H1 (cell line): ENCODE measurements at regions of chr2 and their contacts with region 1.

Region 1: DNA sequence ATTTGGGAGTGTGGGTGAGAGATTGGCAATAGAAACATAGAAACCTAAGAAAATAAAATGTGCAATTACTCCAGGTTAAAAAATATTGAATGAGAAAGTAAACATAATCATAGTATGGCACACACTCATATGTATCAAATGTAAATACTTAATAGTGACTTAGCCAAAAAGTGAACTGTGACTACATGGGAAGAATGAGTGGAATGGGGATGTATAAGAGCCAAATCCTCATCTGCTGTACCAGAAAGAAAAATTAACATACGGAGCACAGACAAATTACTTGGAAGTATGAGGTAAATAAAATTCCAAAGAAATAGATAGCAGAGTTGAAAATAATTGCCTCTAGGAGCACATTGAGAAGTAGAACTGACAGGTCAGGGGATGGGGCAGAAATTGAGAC is 4.0 kb downstream of the FLACC1 start:
- DNase-seq: no peak
- H3K4me3 ChIP-seq: no peak overlapping the region
- H3K27ac ChIP-seq: no peak overlapping the region
- H3K4me1 ChIP-seq: no peaks in the 10 kb centered on the region
- H3K27me3 ChIP-seq: no peaks in the 10 kb centered on the region
- CTCF ChIP-seq: no peak
- EP300 ChIP-seq: no peak
- POLR2A ChIP-seq: no peak
- RAD21 ChIP-seq: no peak

Region 2: DNA sequence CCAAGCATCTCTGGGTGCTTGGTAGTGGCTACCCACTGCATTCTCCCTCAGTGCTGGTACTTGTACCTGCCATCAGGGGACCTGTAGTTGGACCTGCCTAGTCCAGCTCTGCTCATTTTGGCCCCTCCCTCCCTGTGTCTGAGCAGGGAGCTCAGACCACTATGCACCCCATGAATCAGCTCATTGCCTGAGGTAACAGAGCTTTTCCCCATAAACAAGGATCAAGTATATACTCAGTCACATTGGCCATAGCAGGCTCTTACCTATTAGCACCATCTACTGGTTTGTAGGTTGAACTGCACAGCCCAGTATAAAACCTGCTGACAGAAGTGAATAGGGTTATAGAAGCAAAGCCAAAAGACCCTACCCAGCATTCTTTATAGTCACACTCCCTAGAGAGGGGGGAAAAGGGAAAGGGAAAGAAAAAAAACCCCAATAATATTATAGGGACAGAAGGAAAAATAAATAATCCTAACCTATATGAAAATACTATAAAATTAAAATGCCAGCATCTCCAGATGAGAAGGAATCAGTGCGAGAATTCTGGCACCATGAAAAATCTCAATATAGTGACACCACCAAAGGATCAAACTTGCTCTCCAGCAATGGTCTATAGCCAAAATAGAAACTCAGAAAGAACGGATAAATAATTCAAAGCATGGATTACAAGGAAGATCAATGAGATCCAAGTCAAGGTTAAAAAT is 10.9 kb after region 1 on chr2:
- CTCF ChIA-PET with region 1: interaction called, 59 read pairs
- POLR2A ChIA-PET with region 1: no interaction called
- DNase-seq: no peak
- H3K4me3 ChIP-seq: no peak overlapping the region
- H3K27ac ChIP-seq: no peak overlapping the region
- H3K4me1 ChIP-seq: no peaks in the 10 kb centered on the region
- H3K27me3 ChIP-seq: no peaks in the 10 kb centered on the region
- CTCF ChIP-seq: peak in 2 of 3 experiments; percentile 81 to 85; a peak in 3 of 4 replicates
- EP300 ChIP-seq: no peak
- POLR2A ChIP-seq: no peak
- RAD21 ChIP-seq: peak; percentile 88 to 92

Region 3: GRCh38 chr2:201440182-201440581 is 87.1 kb after region 1 on chr2:
- CTCF ChIA-PET with region 1: no interaction called
- POLR2A ChIA-PET with region 1: no interaction called
- DNase-seq: no peak
- H3K4me3 ChIP-seq: no peak overlapping the region
- H3K27ac ChIP-seq: no peak overlapping the region
- H3K4me1 ChIP-seq: no peaks in the 10 kb centered on the region
- H3K27me3 ChIP-seq: no peaks in the 10 kb centered on the region
- CTCF ChIP-seq: no peak
- EP300 ChIP-seq: no peak
- POLR2A ChIP-seq: no peak
- RAD21 ChIP-seq: no peak